ENCODE measurements at regions of chr4 and their contacts with region 1.

Region 1: GRCh38 chr4:78938868-78939666 is at the start of gene PAQR3:
- DNase-seq: peak; percentile 18 to 90
- H3K4me3 ChIP-seq: peak within 1 kb of the TSS; percentile 82 to 91
- H3K27ac ChIP-seq: peak within 1 kb of the TSS; percentile 47 to 55
- H3K4me1 ChIP-seq: peaks cover 0 to 10% of the 10 kb centered on the region in 2 donors
- H3K27me3 ChIP-seq: no peaks in the 10 kb centered on the region
- CTCF ChIP-seq: no peak
- total RNA-seq, gene PAQR3: 6.7 TPM

Region 2: DNA sequence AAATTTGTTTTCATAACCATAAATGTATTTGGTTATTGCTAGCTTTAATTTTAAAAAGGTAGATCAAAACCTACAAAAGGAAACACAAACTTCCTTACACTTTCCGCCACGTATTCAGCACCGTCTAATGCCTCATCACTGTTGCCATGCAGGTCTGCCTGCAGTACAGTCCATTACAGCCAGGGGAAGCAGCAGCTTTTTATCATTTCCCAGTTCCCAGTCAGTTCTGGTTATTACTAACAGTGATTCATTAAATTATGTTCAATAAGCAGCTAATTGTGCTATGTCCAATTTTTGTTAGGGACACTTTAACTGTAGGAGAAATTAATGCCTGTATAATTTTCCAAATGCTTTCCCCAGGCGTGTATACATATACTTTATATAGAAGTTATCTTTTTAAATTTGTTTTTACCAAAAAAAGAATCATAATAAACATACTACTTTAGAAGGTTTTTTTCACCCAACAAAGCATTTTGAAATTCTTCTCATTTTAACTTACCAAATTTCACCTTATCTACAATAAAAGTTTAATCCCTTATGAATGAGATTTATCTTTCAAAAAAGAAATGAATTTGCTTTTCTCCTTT is 294.2 kb before region 1 on chr4:
- intact Hi-C with region 1: loop called (anchors 10 kb)
- DNase-seq: peak in 1 of 2 donors; percentile 82
- H3K4me3 ChIP-seq: no peak overlapping the region
- H3K27ac ChIP-seq: peak overlapping the region; percentile 57 to 76
- H3K4me1 ChIP-seq: peaks cover 0 to 16% of the 10 kb centered on the region in 2 donors
- H3K27me3 ChIP-seq: no peaks in the 10 kb centered on the region
- CTCF ChIP-seq: peak; percentile 78 to 88 (median 87)

Region 3: DNA sequence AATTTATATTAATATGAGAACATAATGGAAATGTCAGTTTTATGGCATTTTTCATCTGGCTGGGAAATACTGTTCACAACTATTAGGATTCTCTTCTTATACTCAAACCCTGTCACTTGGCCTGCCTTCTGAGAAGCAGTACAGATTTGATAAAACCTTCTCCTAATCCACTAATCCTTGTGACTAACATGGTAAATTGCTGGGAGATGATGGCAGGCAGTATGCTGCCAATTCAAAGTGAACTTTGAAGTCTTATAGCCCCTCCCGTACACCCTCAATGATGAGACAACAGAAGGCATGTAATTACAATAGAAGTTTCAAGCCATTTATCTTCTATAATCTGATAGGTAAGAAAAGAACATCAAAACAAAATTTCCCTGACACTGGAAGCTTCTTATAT is 36.8 kb before region 1 on chr4:
- intact Hi-C with region 1: no loop called
- DNase-seq: no peak
- H3K4me3 ChIP-seq: no peak overlapping the region
- H3K27ac ChIP-seq: no peak overlapping the region
- H3K4me1 ChIP-seq: no peaks in the 10 kb centered on the region
- H3K27me3 ChIP-seq: no peaks in the 10 kb centered on the region
- CTCF ChIP-seq: no peak

Measured in ascending aorta (tissue), 2 donors.